ENCODE measurements at regions of chr5 and their contacts with region 1.

Region 1: DNA sequence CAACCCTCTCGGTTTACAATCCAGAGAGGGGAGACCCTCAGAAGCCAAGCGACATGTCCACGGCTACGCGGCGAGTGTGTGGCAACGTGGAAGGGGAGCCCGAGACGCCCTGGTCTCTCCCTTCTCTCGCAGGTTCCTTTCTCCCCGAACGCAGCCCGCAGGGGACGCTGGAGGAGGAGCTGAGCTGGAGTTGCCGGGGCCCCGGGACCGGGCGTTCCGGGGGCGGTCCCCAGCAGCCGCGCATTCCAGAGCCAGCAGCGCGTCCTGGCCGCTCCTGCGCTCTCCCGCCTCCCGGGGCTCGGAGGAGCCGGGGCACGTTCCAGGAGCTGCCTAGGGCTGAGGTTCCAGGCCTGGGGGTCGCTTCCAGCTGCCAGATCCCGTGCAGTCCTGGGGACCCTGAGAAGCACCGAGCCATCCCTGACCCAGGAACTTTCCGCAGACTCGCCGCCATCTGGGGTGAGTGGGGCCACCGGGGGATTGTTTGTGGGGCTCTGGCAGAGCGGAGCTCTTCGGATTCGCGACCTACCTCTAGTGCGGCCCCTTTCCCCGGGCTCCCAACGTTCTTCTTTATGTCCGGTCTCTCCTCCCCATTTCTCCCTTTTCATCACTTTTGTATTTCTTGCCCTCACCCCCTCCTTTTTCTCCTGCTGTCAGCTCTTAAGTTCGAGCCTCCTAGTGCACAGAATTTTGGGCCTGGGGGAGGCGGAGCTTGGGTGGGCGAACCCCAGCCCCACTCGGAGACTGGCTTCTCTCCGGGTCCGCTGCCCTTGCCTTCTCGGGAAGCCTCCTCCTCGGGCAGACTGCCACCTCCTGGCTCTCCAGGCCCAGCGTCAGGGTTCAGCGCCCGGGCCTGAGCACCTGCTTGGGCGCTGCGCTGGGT is at the start of gene SMIM3:
- DNase-seq: no peak
- ATAC-seq: peak; percentile 27
- H3K4me3 Mint-ChIP-seq: peak within 1 kb of the TSS; percentile 79
- H3K27ac Mint-ChIP-seq: no peak within 1 kb of the TSS
- H3K4me1 Mint-ChIP-seq: peaks cover 33% of the 10 kb centered on the region
- H3K27me3 Mint-ChIP-seq: peaks cover 43% of the 10 kb centered on the region
- CTCF ChIP-seq: no peak
- total RNA-seq, gene SMIM3: 0.22 TPM in 1 of 2 replicates, not detected in the other

Region 2: DNA sequence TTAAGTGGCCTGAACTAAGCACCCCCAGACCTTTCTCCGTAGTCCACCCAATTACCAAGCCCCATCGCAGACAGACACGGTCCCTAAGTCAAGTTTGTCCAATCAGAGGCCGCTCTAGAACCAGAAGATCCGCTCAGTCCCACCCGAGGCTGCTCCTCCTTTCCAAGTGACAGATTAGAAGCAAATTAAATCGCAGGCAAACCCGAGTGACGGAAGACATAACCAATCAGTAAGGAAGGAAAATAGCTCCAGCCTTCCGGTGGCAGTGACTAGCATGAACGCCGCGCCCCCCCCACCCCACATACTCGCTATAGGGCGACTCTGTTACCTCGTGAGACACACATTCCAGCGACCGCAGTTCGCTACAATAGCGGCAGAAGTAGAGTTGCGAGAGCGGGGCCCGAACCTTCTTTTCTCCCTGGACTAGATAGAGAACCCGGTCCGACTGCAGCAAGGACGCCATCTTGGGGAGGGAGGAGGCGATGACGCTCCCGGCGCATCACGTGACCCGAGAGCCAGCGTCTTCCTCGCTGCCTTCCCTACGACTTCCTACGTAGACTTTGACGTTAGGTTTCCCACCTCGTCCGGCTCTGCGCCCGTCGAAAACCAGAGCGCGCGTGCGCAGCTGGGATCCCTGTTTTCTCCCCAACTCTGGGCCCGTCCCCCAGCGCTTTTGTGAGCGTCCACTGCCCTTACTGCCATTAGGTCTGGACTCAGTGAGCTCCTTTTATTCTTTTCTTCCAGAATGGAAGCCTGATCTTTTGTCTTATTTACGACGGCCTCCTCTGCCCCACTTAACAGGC is 20.0 kb before region 1 on chr5 and contains the start of gene DCTN4:
- CTCF ChIA-PET with region 1: no interaction called
- POLR2A ChIA-PET with region 1: interaction called, 7 read pairs
- intact Hi-C with region 1: loop called (anchors 1 kb)
- DNase-seq: peak; percentile 87
- ATAC-seq: peak; percentile 93
- H3K4me3 Mint-ChIP-seq: no peak within 1 kb of the TSS
- H3K27ac Mint-ChIP-seq: no peak within 1 kb of the TSS
- H3K4me1 Mint-ChIP-seq: peaks cover 17% of the 10 kb centered on the region
- H3K27me3 Mint-ChIP-seq: peaks cover 9% of the 10 kb centered on the region
- CTCF ChIP-seq: no peak
- total RNA-seq, gene DCTN4: 49.0 and 49.8 TPM in 2 replicates

Region 3: GRCh38 chr5:150809363-150809762 is 30.6 kb after region 1 on chr5:
- CTCF ChIA-PET with region 1: no interaction called
- POLR2A ChIA-PET with region 1: no interaction called
- intact Hi-C with region 1: no loop called
- DNase-seq: no peak
- ATAC-seq: no peak
- H3K4me3 Mint-ChIP-seq: no peak overlapping the region
- H3K27ac Mint-ChIP-seq: no peak overlapping the region
- H3K4me1 Mint-ChIP-seq: no peaks in the 10 kb centered on the region
- H3K27me3 Mint-ChIP-seq: peaks cover 4% of the 10 kb centered on the region
- CTCF ChIP-seq: no peak

Region 4: DNA sequence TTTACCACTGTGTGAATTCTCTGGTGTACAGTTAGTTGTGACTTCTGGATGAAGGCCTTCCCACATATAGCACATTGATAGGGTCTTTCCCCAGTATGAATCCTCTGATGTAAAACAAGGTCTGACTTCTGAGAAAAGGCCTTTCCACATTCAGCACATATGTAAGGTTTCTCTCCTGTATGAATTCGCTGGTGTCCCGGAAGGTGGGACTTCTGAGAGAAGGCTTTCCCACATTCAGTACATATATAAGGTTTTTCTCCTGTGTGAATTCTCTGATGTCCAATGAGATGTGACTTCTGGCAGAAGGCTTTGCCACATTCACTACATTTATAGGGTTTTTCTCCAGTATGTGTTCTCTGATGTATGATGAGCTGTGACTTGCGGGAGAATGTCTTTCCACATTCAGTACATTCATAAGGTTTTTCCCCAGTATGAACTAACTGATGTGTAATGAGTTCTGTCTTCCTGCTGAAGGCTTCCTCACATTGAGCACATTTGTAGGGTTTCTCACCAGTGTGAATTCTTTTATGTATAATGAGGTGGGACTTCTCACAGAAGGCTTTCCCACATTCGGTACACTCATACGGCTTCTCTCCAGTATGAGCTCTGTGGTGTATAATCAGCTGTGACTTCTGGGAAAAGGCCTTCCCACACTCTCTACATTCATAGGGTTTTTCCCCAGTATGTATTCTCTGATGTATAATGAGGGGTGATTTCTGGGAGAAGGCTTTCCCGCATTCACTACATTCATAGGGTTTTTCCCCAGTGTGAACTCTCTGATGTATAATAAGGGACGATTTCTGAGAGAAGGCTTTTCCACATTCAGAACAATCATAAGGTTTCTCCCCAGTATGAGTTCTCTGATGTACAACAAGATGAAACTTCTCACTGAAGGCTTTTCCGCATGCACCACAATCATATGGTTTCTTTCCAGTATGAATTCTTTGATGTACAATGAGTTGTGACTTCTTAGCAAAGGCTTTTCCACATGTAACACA is 117.0 kb after region 1 on chr5:
- CTCF ChIA-PET with region 1: no interaction called
- POLR2A ChIA-PET with region 1: no interaction called
- intact Hi-C with region 1: no loop called
- DNase-seq: no peak
- ATAC-seq: no peak
- H3K4me3 Mint-ChIP-seq: no peak overlapping the region
- H3K27ac Mint-ChIP-seq: no peak overlapping the region
- H3K4me1 Mint-ChIP-seq: no peaks in the 10 kb centered on the region
- H3K27me3 Mint-ChIP-seq: no peaks in the 10 kb centered on the region
- CTCF ChIP-seq: no peak

Region 5: DNA sequence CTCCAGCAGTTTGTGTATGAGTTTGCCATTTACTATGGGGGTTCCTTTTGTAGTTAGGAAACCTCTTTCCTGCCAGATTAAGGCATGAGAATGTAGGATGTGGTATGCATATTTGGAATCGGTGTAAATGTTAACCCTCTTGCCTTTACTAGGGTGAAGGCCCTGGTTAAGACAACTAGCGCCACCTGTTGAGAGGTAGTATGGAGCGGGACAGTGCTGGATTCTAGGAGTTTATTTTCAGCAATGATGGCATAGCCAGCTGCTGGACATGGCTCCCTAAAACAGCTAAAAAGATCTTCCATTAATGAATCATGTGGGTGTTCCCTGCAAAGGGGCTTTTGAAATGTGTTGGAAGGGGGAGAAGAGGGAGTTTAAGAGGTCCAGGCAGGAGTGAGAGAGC is 210.9 kb after region 1 on chr5:
- CTCF ChIA-PET with region 1: no interaction called
- POLR2A ChIA-PET with region 1: interaction called, 12 read pairs
- intact Hi-C with region 1: no loop called
- DNase-seq: no peak
- ATAC-seq: no peak
- H3K4me3 Mint-ChIP-seq: no peak overlapping the region
- H3K27ac Mint-ChIP-seq: no peak overlapping the region
- H3K4me1 Mint-ChIP-seq: no peaks in the 10 kb centered on the region
- H3K27me3 Mint-ChIP-seq: no peaks in the 10 kb centered on the region
- CTCF ChIP-seq: no peak